ENCODE measurements at regions of chr17 and their contacts with region 1.

Region 1: DNA sequence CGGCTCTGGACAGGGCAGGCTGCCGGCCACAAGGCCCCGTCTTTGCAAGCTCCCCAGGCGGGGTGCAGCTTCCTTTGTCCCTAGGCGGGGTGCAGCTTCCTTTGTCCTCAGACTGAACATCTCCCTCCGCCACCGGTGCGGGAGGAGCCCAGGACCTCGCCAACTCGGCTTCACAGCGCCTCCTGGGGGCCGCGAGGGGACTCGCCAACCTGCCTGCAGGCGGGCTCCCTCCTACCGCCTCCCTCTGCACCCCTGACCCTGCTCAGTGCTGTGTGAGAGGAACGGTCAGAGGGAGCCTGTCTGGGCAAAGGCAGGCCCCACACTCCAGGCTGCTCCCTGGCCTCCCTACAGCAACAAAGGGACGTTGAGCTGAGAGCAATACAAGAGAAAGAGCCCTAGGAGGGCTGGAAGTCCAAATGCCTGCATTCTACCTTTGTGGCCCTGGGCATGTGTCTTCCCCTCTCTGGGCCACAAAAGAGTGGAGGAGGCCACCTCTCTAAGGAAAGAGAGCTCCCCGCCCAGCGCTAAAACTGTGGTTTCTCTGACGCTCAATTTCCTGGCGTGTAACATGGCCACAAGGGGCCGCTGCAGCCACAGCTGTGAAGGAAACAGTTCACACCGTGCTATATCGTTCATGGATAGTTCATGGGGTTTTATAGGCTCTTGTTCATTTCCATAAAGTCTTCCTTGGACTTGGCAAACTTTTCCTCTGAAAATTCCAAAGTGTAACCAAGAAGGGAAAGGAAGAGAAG is 20.9 kb upstream of the KRT19 start:
- DNase-seq: peak; percentile 92
- ATAC-seq: peak; percentile 91
- H3K4me3 Mint-ChIP-seq: peak overlapping the region; percentile 23
- H3K27ac Mint-ChIP-seq: peak overlapping the region; percentile 77
- H3K4me1 Mint-ChIP-seq: peaks cover 20% of the 10 kb centered on the region
- H3K27me3 Mint-ChIP-seq: peaks cover 10% of the 10 kb centered on the region

Region 2: DNA sequence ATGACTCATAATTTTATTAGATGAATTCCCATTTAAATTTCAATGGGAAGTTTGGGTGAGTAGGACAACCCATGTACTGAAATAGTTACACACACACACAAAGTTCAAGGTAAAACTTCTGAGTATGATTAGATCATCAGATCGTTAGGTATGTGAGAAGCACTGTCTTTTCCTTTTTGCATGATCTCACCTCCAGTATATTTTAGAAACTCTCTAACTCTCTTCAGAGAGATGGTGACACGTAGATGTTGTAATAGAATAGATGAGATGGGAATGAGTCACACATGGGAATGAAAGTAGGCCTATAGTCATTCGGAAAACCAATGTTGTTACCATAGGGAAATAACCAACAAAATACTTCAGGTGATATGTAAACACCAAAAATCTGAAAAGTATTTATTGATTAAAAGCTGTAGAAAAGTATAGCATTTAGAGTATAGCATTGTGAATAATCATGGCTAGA is 633.8 kb before region 1 on chr17:
- CTCF ChIA-PET with region 1: interaction called, 28 read pairs
- POLR2A ChIA-PET with region 1: no interaction called
- DNase-seq: no peak
- ATAC-seq: no peak
- H3K4me3 Mint-ChIP-seq: no peak overlapping the region
- H3K27ac Mint-ChIP-seq: no peak overlapping the region
- H3K4me1 Mint-ChIP-seq: no peaks in the 10 kb centered on the region
- H3K27me3 Mint-ChIP-seq: peaks cover 2% of the 10 kb centered on the region

Region 3: GRCh38 chr17:41264599-41264998 is 284.4 kb before region 1 on chr17:
- CTCF ChIA-PET with region 1: no interaction called
- POLR2A ChIA-PET with region 1: no interaction called
- DNase-seq: no peak
- ATAC-seq: no peak
- H3K4me3 Mint-ChIP-seq: no peak overlapping the region
- H3K27ac Mint-ChIP-seq: no peak overlapping the region
- H3K4me1 Mint-ChIP-seq: no peaks in the 10 kb centered on the region
- H3K27me3 Mint-ChIP-seq: peaks cover 18% of the 10 kb centered on the region

Region 4: DNA sequence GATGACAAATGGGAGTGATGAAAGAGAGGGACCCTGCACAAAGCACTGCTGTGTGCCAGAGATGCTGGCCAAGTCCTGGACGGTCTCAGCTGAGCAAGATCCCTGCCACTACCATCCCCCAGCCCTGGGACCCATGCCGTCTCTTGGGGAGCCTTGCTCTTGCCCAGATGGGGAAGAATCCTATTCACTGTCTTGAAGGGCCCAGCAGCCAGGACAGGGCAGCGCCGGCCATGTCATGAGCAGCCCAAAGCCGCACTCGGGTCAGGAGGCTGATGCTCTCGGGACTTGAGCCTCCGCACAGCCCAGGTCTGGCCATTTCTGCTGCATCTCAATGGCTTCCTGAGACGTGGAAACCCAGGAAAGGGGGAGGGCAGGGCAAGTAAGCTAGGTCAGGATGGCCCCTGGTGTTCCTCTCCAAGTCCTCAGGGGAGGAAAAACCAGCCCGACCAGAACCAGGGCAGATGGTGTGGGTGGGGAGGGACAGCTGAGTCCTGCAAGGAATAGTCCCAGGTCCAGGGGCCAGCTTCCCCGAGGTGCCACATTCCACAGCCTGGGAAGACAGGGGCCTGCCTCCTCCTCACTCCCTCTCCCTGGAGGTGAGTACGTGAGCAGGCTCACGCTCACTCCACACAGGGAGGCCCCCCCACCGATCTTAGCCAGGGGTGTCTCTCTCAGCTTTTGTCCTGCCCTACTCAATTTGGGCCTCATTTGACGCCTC is 13.1 kb before region 1 on chr17:
- CTCF ChIA-PET with region 1: interaction called, 20 read pairs
- POLR2A ChIA-PET with region 1: no interaction called
- DNase-seq: no peak
- ATAC-seq: no peak
- H3K4me3 Mint-ChIP-seq: no peak overlapping the region
- H3K27ac Mint-ChIP-seq: no peak overlapping the region
- H3K4me1 Mint-ChIP-seq: no peaks in the 10 kb centered on the region
- H3K27me3 Mint-ChIP-seq: peaks cover 21% of the 10 kb centered on the region

Region 5: DNA sequence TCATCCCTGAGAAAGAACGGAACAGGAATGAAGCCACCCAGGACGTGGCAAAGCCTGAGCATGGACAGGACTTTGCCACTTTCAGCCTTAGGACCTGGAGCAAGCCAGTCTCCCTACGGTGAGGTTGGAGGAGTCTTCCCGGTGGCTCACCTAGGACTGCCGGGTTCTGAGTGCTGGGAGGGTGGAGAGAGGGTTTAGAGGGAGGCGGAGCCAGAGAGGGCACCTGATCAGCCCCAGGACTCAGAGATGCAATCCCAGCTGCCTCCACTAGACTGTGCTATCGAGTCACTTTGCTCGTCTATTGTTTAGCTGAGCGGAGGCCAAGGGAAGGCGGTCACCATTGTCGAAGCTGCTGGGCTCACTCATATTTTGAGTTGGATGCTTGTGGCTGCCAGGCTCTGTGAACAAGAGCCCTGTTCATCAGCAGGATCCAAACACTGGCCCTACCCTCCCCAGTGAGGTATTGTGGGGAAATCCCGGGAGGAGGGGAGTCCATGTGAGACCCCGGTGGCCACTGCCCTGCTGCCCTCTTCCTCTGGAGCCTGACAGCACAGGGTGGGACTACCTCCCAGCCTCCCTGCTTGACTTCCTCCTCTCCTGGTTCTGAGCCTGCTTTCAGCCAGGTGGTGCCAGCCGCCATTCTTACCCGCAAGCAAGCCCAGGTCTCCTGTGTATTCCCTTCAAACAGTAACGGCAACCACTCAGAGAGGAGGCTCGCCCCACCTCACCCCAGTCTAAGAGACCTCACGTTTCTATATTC is 30.6 kb after region 1 on chr17:
- CTCF ChIA-PET with region 1: interaction called, 13 read pairs
- POLR2A ChIA-PET with region 1: no interaction called
- DNase-seq: peak; percentile 84
- ATAC-seq: peak; percentile 96
- H3K4me3 Mint-ChIP-seq: no peak overlapping the region
- H3K27ac Mint-ChIP-seq: no peak overlapping the region
- H3K4me1 Mint-ChIP-seq: no peaks in the 10 kb centered on the region
- H3K27me3 Mint-ChIP-seq: peaks cover 17% of the 10 kb centered on the region

Region 6: DNA sequence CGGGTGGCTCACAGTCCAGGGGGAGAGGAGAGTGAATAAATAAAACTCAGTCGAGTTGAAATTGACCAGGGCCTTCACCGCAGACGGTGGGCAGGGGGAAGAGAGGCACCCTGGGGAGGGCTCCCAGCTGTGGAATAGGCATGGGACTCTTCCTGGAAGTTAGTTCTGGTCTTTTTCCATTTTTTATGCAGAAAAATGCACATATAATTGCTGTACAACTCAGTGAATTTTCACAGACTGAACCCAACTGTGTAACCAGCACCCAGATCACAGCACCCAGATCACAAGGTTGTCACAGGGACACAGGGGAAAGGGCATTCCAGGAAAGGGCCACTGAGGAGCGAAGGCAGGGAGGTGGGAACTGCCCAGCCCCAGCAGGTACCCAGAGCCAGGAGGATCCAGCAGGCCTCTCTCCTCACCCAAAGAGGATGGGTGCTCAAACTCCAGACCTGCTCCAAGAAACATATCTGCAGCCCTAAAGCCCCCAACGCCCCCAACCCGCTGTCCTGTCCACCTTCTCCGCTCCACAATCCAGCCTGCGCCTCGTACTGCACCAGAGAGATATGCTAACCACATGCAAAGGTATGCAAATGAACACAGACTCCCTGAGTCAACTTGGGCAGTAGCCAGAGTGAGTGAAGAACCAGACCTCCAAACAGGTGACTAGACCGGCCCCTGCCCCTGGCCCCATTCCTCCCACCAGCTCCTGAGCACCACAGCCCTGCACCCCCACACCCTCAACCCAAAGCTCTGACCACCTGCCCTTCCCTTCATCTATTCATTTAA is 110.6 kb after region 1 on chr17:
- CTCF ChIA-PET with region 1: interaction called, 204 read pairs
- POLR2A ChIA-PET with region 1: no interaction called
- DNase-seq: no peak
- ATAC-seq: no peak
- H3K4me3 Mint-ChIP-seq: no peak overlapping the region
- H3K27ac Mint-ChIP-seq: no peak overlapping the region
- H3K4me1 Mint-ChIP-seq: peaks cover 7% of the 10 kb centered on the region
- H3K27me3 Mint-ChIP-seq: peaks cover 9% of the 10 kb centered on the region

Measured in activated CD8-positive, alpha-beta T cell treated with anti-CD3 and anti-CD28 coated beads, Interleukin-2, amount 10 ng/mL, durations not matched to agents 7 days and 5 days (primary cell).